ENCODE measurements at regions of chr21 and their contacts with region 1.

Region 1: GRCh38 chr21:33608559-33608958 is 20.1 kb upstream of the DONSON start:
- DNase-seq: no peak
- H3K4me3 ChIP-seq: no peak overlapping the region
- H3K27ac ChIP-seq: no peak overlapping the region
- H3K4me1 ChIP-seq: no peaks in the 10 kb centered on the region
- H3K27me3 ChIP-seq: no peaks in the 10 kb centered on the region
- CTCF ChIP-seq: no peak
- POLR2A ChIP-seq: no peak

Region 2: DNA sequence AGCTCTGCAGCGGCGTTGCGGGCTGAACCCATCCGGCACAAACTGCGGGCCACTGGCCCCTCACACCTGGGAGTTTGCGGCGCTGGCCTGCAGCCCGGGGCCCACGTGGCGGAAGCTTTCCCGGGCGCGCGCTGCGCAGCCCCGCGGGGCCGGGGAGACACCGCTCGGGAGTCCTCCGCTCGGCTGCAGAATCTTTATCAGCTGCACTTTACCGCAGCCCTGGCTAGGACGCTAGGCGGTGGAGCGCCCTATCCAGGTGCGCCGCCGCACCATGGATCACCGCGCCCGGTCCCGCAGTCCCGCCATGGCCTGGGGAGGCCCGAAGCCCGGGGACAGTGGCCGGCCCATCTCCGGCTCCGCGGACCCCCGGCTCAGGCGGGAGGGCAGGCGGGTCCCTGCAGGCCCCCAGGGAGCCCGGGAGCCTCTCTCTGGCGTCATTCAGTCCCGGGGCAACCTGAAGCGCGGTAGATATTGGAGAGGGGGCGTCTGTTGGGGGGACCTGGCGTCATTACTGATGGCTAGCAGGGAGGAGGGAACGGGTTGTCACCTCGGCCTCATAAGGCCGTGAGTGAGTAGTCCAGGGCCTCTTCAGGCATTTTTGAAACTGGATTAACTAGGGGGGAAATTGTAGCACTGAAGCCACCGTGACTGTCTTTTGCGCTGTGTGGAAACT is 588.5 kb before region 1 on chr21:
- intact Hi-C with region 1: loop called (anchors 5 kb)
- DNase-seq: no peak
- H3K4me3 ChIP-seq: peak overlapping the region in 1 of 3 donors; percentile 53
- H3K27ac ChIP-seq: no peak overlapping the region
- H3K4me1 ChIP-seq: peaks cover 0 to 5% of the 10 kb centered on the region in 2 donors
- H3K27me3 ChIP-seq: peaks cover 4 to 94% of the 10 kb centered on the region in 2 donors
- CTCF ChIP-seq: no peak
- POLR2A ChIP-seq: no peak

Region 3: GRCh38 chr21:33386222-33386784 is 222.3 kb before region 1 on chr21:
- intact Hi-C with region 1: no loop called
- DNase-seq: no peak
- H3K4me3 ChIP-seq: no peak overlapping the region
- H3K27ac ChIP-seq: no peak overlapping the region
- H3K4me1 ChIP-seq: no peaks in the 10 kb centered on the region
- H3K27me3 ChIP-seq: no peaks in the 10 kb centered on the region
- CTCF ChIP-seq: no peak
- POLR2A ChIP-seq: no peak

Region 4: GRCh38 chr21:34284666-34285065 is 676.1 kb after region 1 on chr21:
- intact Hi-C with region 1: no loop called
- DNase-seq: no peak
- H3K4me3 ChIP-seq: no peak overlapping the region
- H3K27ac ChIP-seq: no peak overlapping the region
- H3K4me1 ChIP-seq: no peaks in the 10 kb centered on the region
- H3K27me3 ChIP-seq: no peaks in the 10 kb centered on the region
- CTCF ChIP-seq: no peak
- POLR2A ChIP-seq: no peak